Activated B cell treated with CpG ODN at 0.5 μM for 24 hours (primary cell): ENCODE measurements at regions of chr19 and their contacts with region 1.

Region 1: GRCh38 chr19:13861732-13862531 is 15.0 kb upstream of the NANOS3 start:
- DNase-seq: peak; percentile 92
- ATAC-seq: peak; percentile 82
- H3K4me3 Mint-ChIP-seq: peak overlapping the region; percentile 91
- H3K27ac Mint-ChIP-seq: peak overlapping the region; percentile 80
- H3K4me1 Mint-ChIP-seq: peaks cover 28% of the 10 kb centered on the region
- H3K27me3 Mint-ChIP-seq: peaks cover 26% of the 10 kb centered on the region
- CTCF ChIP-seq: peak; percentile 96

Region 2: DNA sequence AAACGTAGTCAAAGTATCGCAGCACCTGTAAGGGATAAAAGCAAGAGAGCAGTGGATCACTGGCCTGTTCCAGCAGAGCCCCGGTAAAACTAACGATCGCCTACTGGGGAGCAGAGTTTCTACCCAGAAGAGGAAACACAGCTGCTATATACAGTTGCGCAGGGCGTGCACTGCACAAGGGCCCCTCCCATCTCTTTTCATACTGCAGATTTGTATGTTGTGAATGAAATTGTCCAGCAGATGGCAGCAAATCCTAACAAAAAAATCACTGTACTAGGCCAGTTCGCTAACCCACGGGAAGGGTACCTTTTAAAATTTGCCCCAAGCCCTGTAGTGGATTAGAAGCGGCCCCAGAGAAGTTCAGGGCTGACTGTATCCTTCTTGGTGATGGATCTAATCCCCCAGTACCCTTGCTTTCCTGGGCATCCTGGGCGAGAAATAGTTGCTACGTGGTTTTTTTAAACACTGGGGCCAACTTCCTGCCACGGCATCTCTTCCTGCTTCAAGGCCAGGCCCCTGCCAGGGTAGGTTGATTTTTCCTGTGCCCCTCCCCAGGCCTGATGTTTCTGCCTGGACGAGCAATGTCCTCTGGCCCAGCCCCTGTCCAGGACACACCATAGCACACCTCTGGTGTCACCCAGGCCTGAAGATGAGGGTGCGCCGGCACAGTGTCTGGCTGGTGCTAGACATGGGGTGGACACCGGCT is 584.7 kb before region 1 on chr19:
- CTCF ChIA-PET with region 1: interaction called, 4 read pairs
- POLR2A ChIA-PET with region 1: no interaction called
- intact Hi-C with region 1: loop called (anchors 1 kb)
- DNase-seq: peak; percentile 36
- ATAC-seq: peak; percentile 94
- H3K4me3 Mint-ChIP-seq: peak overlapping the region; percentile 56
- H3K27ac Mint-ChIP-seq: peak overlapping the region; percentile 68
- H3K4me1 Mint-ChIP-seq: peaks cover 16% of the 10 kb centered on the region
- H3K27me3 Mint-ChIP-seq: peaks cover 15% of the 10 kb centered on the region
- CTCF ChIP-seq: peak; percentile 7

Region 3: DNA sequence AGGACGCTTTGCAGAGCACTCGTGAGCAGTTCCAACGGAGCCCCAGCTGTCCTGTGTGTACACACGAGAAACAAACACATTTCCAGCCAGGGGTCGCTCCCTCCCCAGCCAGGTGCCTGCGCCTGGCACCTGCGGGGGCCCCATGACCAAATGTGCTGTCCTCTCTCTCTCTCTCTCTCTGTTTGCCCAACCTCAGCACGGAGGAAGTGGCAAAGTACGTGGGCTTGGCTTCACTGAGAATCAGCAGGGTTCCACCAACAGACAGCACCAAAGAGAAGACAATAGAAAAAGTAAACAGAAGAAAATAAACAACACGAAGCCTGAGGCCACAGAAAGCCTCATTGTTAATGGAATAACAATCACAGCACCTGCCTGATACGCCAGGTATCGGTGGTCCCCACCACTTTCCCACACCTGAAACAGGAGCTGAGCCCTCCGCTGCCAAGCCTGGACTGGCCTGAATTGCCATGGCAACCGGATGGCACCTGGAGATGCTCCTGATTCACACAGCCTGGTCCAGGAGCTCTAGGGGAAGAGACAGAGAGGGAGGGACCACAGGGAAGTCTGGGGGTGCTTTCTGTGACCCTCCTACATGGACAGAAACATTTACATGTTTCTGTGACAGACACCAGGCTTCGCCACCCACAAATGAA is 251.8 kb before region 1 on chr19:
- CTCF ChIA-PET with region 1: no interaction called
- POLR2A ChIA-PET with region 1: interaction called, 5 read pairs
- intact Hi-C with region 1: loop called (anchors 5 kb)
- DNase-seq: no peak
- ATAC-seq: no peak
- H3K4me3 Mint-ChIP-seq: no peak overlapping the region
- H3K27ac Mint-ChIP-seq: no peak overlapping the region
- H3K4me1 Mint-ChIP-seq: no peaks in the 10 kb centered on the region
- H3K27me3 Mint-ChIP-seq: peaks cover 2% of the 10 kb centered on the region
- CTCF ChIP-seq: no peak

Region 4: DNA sequence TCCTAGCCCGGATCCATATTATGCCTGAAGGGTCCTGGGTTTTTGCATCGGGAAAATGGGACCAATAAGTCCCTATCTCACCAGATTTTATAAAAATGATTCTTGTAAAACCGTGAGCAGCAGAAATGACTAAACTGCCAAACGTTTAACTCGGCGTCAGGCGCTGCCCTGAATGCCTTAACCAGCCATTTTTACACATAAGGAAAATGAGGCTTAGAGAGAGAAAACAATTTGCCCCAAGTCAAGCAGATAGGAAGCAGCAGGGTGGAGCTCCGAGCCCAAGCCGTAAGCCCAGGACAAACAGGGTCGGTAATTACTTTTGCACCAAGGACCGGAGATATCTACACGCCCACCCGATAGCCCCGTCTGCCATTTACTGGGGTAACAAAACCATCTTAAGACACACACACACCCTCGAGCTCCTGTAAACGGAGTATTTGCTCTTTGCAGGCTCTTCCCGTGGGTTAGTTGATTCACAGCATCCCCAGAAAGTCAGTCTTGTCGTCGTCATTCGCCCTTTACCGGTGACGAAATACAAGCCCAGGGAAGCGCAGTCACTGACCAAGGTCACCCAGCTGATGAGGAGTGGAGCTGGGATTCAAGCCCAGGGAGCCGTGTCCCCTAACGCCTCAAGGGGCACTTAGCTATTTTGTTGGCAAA is 113.6 kb before region 1 on chr19:
- CTCF ChIA-PET with region 1: interaction called, 6 read pairs
- POLR2A ChIA-PET with region 1: interaction called, 14 read pairs
- intact Hi-C with region 1: no loop called
- DNase-seq: no peak
- ATAC-seq: no peak
- H3K4me3 Mint-ChIP-seq: peak overlapping the region; percentile 87
- H3K27ac Mint-ChIP-seq: peak overlapping the region; percentile 85
- H3K4me1 Mint-ChIP-seq: peaks cover 27% of the 10 kb centered on the region
- H3K27me3 Mint-ChIP-seq: no peaks in the 10 kb centered on the region
- CTCF ChIP-seq: no peak

Region 5: GRCh38 chr19:13784731-13785452 is 77.0 kb before region 1 on chr19:
- CTCF ChIA-PET with region 1: interaction called, 129 read pairs
- POLR2A ChIA-PET with region 1: interaction called, 61 read pairs
- intact Hi-C with region 1: loop called (anchors 1 kb)
- DNase-seq: peak; percentile 62
- ATAC-seq: peak; percentile 70
- H3K4me3 Mint-ChIP-seq: peak overlapping the region; percentile 41
- H3K27ac Mint-ChIP-seq: peak overlapping the region; percentile 76
- H3K4me1 Mint-ChIP-seq: peaks cover 44% of the 10 kb centered on the region
- H3K27me3 Mint-ChIP-seq: no peaks in the 10 kb centered on the region
- CTCF ChIP-seq: no peak

Region 6: GRCh38 chr19:13833330-13834243 is 28.3 kb before region 1 on chr19:
- CTCF ChIA-PET with region 1: interaction called, 18 read pairs
- POLR2A ChIA-PET with region 1: interaction called, 25 read pairs
- intact Hi-C with region 1: loop called (anchors 1 kb)
- DNase-seq: peak; percentile 92
- ATAC-seq: peak; percentile 86
- H3K4me3 Mint-ChIP-seq: peak overlapping the region; percentile 90
- H3K27ac Mint-ChIP-seq: peak overlapping the region; percentile 86
- H3K4me1 Mint-ChIP-seq: peaks cover 45% of the 10 kb centered on the region
- H3K27me3 Mint-ChIP-seq: no peaks in the 10 kb centered on the region
- CTCF ChIP-seq: no peak

Region 7: GRCh38 chr19:13846557-13847406 is 15.2 kb before region 1 on chr19:
- CTCF ChIA-PET with region 1: interaction called, 31 read pairs
- POLR2A ChIA-PET with region 1: interaction called, 24 read pairs
- intact Hi-C with region 1: loop called (anchors 1 kb)
- DNase-seq: peak; percentile 92
- ATAC-seq: peak; percentile 56
- H3K4me3 Mint-ChIP-seq: peak overlapping the region; percentile 88
- H3K27ac Mint-ChIP-seq: peak overlapping the region; percentile 98
- H3K4me1 Mint-ChIP-seq: peaks cover 62% of the 10 kb centered on the region
- H3K27me3 Mint-ChIP-seq: peaks cover 3% of the 10 kb centered on the region
- CTCF ChIP-seq: no peak

Region 8: DNA sequence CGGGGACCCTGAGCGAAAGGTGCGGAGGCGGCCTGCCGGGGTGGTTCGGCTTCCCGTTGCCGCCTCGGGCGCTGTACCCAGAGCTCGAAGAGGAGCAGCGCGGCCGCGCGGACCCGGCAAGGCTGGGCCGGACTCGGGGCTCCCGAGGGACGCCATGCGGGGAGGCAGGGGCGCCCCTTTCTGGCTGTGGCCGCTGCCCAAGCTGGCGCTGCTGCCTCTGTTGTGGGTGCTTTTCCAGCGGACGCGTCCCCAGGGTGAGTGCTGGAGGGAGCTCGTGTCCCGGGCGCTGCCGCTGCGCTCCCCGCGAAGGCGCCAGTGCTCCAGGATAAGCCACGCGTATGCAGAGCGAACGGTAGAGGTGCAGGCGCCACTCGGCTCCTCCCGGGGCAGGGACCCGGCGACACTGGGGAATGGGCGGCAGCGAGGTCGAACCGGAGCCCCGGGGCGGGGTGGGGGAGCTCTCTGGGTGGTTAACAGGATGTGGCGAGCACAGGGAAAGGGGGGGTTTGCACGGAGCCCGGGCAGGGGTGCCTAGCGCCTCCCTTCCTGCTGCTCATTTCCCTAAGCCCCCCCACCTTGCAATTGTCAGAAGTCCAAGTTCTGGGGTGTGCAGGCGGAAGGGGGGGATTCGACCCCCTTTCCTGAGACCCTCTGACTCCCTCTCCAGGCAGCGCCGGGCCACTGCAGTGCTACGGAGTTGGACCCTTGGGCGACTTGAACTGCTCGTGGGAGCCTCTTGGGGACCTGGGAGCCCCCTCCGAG is 170.0 kb after region 1 on chr19 and contains the start of gene IL27RA:
- CTCF ChIA-PET with region 1: no interaction called
- POLR2A ChIA-PET with region 1: no interaction called
- intact Hi-C with region 1: no loop called
- DNase-seq: peak; percentile 70
- ATAC-seq: peak; percentile 74
- H3K4me3 Mint-ChIP-seq: peak within 1 kb of the TSS; percentile 91
- H3K27ac Mint-ChIP-seq: peak within 1 kb of the TSS; percentile 89
- H3K4me1 Mint-ChIP-seq: peaks cover 34% of the 10 kb centered on the region
- H3K27me3 Mint-ChIP-seq: no peaks in the 10 kb centered on the region
- CTCF ChIP-seq: no peak
- total RNA-seq, gene IL27RA: 34.5 and 34.6 TPM in 2 replicates